Right ventricle myocardium superior (tissue), 1 donor: ENCODE measurements at regions of chr2 and their contacts with region 1.

Region 1: DNA sequence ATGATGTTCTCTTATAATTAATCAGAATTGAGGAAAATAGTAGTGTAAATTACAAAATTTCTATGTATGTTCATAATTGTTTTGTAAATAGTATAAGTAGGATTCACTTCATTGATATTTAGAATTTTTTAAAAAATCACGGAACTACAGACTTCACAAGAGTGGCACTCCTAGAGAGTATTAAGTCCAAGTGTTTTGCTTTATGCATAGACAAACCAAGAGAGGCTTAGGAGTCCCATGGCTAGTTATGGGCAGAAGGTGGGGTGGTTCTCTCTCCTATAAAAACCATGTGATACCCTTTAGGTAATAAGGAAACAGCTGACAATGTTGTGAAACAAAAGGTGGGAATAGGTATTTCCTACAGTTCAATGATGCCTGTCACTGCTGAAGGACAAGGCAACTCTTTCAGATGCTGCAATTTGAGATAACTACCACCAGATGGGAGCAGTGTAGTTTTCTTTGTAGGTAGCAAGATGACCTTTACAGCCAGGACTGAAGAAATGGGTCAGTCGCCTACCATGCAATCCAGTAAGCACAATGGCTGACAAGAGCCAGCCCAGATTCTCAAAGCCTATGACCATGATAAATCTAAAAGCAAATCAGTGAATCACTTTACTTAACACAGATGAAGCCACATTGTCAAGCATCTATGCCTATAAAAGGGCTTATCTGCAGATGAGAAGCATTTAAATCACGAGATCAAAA is 83.9 kb downstream of the AAK1 start:
- DNase-seq: no peak
- ATAC-seq: peak; percentile 81

Region 2: GRCh38 chr2:69717861-69718273 is 158.3 kb after region 1 on chr2:
- intact Hi-C with region 1: loop called (anchors 2 kb)
- DNase-seq: no peak
- ATAC-seq: no peak